Activated CD4-positive, alpha-beta T cell treated with anti-CD3 and anti-CD28 coated beads, Interleukin-2, amount 10 ng/mL, durations not matched to agents 24 days and 14 days (primary cell): ENCODE measurements at regions of chr16 and their contacts with region 1.

Region 1: DNA sequence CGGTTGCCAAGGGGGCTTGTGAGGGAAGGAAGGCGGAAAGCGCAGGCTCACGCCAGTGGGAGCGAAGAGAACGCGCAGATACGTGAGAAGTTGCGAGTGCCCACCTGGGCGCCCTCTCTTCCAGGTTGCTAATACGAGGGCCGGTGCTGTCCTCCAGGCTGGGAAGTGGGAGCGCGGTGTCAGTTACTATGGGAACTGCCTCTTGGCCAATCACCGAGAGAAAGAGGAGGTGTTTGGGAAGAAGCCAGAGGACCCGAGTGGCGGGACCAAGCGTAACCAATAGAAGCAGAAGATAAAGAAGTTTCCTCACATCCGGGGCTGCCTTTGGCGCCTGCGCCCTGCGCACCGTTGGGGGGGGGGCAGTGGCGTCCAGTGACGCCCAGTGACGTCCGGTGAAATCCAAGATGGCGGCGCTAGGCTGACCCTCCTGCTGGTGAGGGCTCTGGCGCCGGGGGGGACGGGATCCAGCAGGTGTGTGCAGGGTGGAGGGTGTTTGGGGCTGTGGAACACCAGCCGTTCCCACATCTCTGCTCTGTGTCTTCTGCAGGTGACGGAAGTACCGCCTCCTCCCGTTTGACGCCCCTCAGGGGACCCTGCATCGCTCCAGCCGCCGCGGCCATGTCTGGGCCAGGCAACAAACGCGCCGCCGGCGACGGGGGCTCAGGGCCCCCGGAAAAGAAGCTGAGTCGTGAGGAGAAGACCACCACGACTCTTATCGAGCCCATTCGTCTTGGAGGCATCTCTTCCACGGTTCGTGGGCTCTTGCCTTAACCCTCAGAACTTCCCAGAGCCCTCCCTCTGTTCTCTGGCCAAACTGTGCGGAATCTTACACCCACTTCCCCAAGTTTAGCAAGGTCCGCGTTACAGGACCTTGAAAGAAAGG is at the starts of genes CFAP119 and RNF40:
- DNase-seq: peak; percentile 99
- H3K4me3 Mint-ChIP-seq: peak within 1 kb of the TSS; percentile 97
- H3K27ac Mint-ChIP-seq: peak within 1 kb of the TSS; percentile 83
- H3K4me1 Mint-ChIP-seq: peaks cover 22% of the 10 kb centered on the region
- H3K27me3 Mint-ChIP-seq: no peaks in the 10 kb centered on the region
- total RNA-seq, gene CFAP119: 4.0 and 4.2 TPM in 2 replicates
- total RNA-seq, gene RNF40: 95.4 and 100 TPM in 2 replicates

Region 2: DNA sequence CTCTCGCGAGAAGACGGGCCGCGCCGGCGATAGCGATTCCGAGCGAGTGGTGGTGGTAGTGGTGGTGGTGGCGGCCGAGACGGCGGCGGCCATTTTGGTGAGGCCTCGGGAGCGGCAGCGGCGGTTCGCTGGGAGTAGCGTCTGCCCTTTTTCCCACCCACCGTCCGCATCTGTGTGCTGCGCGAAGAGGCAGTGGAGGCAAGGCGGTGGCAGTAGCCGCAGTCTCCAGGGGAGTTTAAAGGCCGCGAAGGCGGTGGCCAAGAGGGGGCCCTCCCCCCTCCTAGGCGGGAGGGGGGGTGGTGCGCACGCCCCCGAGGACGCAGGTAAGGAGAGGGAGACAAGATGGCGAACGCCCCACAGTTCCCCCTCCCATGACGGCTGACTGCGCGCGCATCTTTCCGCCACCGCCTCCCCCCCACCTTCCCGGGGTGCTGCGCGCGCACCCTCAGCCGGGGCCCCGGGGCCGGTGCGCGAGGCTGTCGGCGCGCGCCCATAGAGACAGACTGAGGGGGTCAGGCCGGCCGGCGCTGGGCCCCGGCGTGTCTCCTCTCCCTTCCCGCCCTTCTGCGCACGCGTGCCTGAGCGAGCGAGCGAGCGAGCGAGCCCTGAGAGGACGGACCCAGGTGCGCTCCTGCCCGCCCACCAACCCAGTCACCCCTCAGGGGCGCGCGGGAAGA is 63.9 kb before region 1 on chr16:
- intact Hi-C with region 1: loop called (anchors 1 kb)
- DNase-seq: peak; percentile 100
- H3K4me3 Mint-ChIP-seq: peak overlapping the region; percentile 97
- H3K27ac Mint-ChIP-seq: peak overlapping the region; percentile 100
- H3K4me1 Mint-ChIP-seq: peaks cover 34% of the 10 kb centered on the region
- H3K27me3 Mint-ChIP-seq: no peaks in the 10 kb centered on the region

Region 3: GRCh38 chr16:30747799-30748634 is 14.2 kb before region 1 on chr16 and contains the start of gene PHKG2:
- intact Hi-C with region 1: loop called (anchors 1 kb)
- DNase-seq: peak; percentile 99
- H3K4me3 Mint-ChIP-seq: peak within 1 kb of the TSS; percentile 94
- H3K27ac Mint-ChIP-seq: peak within 1 kb of the TSS; percentile 85
- H3K4me1 Mint-ChIP-seq: peaks cover 21% of the 10 kb centered on the region
- H3K27me3 Mint-ChIP-seq: no peaks in the 10 kb centered on the region
- total RNA-seq, gene PHKG2: 39.5 and 41.0 TPM in 2 replicates

Region 4: DNA sequence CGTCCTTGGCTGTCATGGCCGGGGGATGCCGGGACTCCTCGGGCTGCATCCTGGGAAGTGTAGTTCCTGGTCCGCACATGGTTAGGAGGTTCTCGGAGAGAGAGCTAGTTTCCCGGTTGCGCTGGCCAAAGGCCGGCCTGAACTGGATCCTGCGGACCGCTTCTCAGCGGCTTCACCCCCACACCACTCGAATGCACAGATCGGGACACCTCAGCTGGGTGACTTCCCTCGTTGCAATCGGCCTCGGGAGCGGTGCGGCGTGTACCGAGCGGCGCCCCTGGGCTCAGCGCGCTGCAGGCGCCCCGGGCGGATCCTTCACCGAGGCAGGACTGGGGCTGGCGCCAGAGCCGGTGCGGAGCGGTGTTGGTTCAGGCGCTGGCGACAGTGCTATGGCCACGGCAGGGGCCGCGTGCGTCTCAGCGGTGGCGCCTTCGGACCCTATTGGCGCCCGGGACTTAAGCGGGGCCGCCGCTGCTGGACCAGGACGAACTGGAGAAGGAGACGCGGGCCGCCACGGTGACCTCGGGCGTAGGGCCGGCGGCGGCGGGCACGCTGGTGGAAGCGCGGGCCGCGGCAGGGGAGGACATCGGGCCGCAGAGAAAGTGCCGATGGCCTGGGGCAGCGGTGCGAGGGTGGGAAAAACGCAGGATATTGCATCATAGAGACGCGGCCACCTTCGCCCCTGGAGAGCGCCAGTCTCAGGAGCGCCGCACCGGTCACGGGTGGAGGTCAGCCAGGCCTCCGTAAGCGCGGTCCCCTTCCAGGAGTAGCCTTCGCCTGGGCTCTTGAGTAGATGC is 13.4 kb after region 1 on chr16:
- intact Hi-C with region 1: loop called (anchors 1 kb)
- DNase-seq: peak; percentile 90
- H3K4me3 Mint-ChIP-seq: peak overlapping the region; percentile 91
- H3K27ac Mint-ChIP-seq: peak overlapping the region; percentile 95
- H3K4me1 Mint-ChIP-seq: peaks cover 22% of the 10 kb centered on the region
- H3K27me3 Mint-ChIP-seq: no peaks in the 10 kb centered on the region

Region 5: DNA sequence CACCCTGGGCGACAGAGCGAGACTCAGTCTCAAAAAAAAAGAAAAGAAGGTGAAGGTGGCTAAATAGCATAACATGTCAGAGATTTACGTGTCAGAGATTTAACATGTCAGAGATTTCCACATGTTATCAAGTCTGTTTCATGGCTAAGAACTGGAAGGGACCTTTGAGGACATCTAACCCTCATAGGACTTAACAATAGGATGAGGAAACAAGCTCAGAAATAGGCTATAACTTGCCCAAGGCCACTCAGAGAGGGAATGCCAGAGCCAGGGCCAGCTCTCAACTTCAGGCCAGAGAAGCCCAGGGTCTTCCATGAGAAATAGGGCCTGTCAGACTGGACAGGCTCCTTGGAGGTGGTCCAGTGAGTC is 51.6 kb after region 1 on chr16:
- intact Hi-C with region 1: loop called (anchors 1 kb)
- DNase-seq: no peak
- H3K4me3 Mint-ChIP-seq: peak overlapping the region; percentile 96
- H3K27ac Mint-ChIP-seq: peak overlapping the region; percentile 84
- H3K4me1 Mint-ChIP-seq: peaks cover 10% of the 10 kb centered on the region
- H3K27me3 Mint-ChIP-seq: peaks cover 2% of the 10 kb centered on the region

Region 6: DNA sequence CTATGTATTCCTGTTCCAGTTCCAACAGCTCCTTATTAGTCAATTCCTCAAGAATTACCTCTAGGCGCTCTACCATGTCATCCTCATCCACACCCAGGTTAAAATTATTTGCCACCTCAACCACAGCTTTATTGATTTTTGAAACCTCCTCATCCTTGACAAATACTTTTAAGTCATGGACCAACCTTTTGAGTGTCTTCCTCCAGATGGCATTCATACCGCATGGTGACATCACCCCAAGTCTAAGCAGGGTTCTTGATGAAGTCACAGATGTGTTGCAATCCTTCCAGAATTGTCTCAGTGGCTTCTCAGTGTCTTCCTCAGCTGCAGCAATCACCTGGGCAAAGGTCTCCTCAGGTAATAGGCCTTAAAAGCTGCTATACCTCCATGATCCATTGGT is 91.6 kb after region 1 on chr16:
- intact Hi-C with region 1: no loop called
- DNase-seq: no peak
- H3K4me3 Mint-ChIP-seq: no peak overlapping the region
- H3K27ac Mint-ChIP-seq: no peak overlapping the region
- H3K4me1 Mint-ChIP-seq: no peaks in the 10 kb centered on the region
- H3K27me3 Mint-ChIP-seq: no peaks in the 10 kb centered on the region

Region 7: DNA sequence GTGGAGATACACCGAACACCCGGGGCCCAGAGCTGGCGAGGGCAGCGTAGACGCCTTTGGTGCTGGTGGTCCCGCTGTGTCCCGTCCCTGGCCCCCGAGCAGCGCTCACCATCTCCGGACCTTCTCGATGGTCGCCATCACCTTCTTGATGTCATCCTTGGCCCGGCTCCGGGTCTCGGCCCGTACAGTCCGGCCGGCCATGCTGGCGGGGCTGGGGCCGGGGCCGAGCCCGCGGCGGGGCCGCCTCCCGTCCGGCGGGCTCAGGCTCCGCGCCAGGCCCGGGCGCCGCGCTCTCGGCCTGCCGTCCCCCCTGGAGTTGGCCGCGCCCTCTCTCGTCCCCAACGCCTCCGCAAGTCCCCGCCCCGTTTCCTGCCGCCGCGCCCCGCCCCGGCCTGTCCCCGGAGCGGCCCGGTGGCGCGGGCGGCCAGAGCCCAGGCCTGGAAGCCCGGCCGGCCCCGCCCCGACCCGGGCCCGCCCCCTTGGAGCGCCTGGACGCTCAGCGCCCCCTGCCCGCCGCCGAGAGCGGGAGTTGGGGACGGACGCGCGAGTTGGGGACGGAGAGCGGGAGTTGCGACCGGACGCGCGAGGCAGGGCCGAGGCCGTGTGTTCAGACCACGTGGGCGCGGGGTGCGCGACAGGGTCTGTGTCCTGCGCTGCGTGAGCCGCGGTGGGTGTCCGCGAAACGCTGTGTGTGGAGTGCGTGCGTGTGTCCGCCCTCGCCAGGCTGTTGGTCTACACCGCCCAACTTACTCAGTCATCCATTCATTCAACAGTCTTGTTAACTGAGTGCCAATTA is 131.8 kb after region 1 on chr16 and contains the start of gene BCL7C:
- intact Hi-C with region 1: loop called (anchors 5 kb)
- DNase-seq: peak; percentile 96
- H3K4me3 Mint-ChIP-seq: peak within 1 kb of the TSS; percentile 94
- H3K27ac Mint-ChIP-seq: peak within 1 kb of the TSS; percentile 90
- H3K4me1 Mint-ChIP-seq: peaks cover 35% of the 10 kb centered on the region
- H3K27me3 Mint-ChIP-seq: no peaks in the 10 kb centered on the region
- total RNA-seq, gene BCL7C: 23.9 and 24.5 TPM in 2 replicates